Activated CD4-positive, alpha-beta T cell treated with anti-CD3 and anti-CD28 coated beads for 36 hours (primary cell): ENCODE measurements at regions of chr15 and their contacts with region 1.

Region 1: GRCh38 chr15:94582369-94582768 is 351.0 kb downstream of the MCTP2 start:
- DNase-seq: peak; percentile 62
- ATAC-seq: peak; percentile 57
- H3K4me3 Mint-ChIP-seq: no peak overlapping the region
- H3K27ac Mint-ChIP-seq: no peak overlapping the region
- H3K4me1 Mint-ChIP-seq: peaks cover 25% of the 10 kb centered on the region
- H3K27me3 Mint-ChIP-seq: peaks cover 68% of the 10 kb centered on the region

Region 2: GRCh38 chr15:94610069-94610468 is 27.7 kb after region 1 on chr15:
- CTCF ChIA-PET with region 1: interaction called, 8 read pairs
- POLR2A ChIA-PET with region 1: interaction called, 3 read pairs
- intact Hi-C with region 1: loop called in 1 of 2 experiments (anchors 2 kb)
- DNase-seq: no peak
- ATAC-seq: peak; percentile 60
- H3K4me3 Mint-ChIP-seq: no peak overlapping the region
- H3K27ac Mint-ChIP-seq: no peak overlapping the region
- H3K4me1 Mint-ChIP-seq: peaks cover 16% of the 10 kb centered on the region
- H3K27me3 Mint-ChIP-seq: peaks cover 52% of the 10 kb centered on the region

Region 3: GRCh38 chr15:94655249-94655880 is 73.0 kb after region 1 on chr15:
- CTCF ChIA-PET with region 1: no interaction called
- POLR2A ChIA-PET with region 1: no interaction called
- intact Hi-C with region 1: no loop called
- DNase-seq: no peak
- ATAC-seq: no peak
- H3K4me3 Mint-ChIP-seq: no peak overlapping the region
- H3K27ac Mint-ChIP-seq: no peak overlapping the region
- H3K4me1 Mint-ChIP-seq: no peaks in the 10 kb centered on the region
- H3K27me3 Mint-ChIP-seq: peaks cover 14% of the 10 kb centered on the region

Region 4: GRCh38 chr15:95041299-95041698 is 458.9 kb after region 1 on chr15:
- CTCF ChIA-PET with region 1: no interaction called
- POLR2A ChIA-PET with region 1: no interaction called
- intact Hi-C with region 1: no loop called
- DNase-seq: no peak
- ATAC-seq: no peak
- H3K4me3 Mint-ChIP-seq: no peak overlapping the region
- H3K27ac Mint-ChIP-seq: no peak overlapping the region
- H3K4me1 Mint-ChIP-seq: no peaks in the 10 kb centered on the region
- H3K27me3 Mint-ChIP-seq: no peaks in the 10 kb centered on the region

Region 5: DNA sequence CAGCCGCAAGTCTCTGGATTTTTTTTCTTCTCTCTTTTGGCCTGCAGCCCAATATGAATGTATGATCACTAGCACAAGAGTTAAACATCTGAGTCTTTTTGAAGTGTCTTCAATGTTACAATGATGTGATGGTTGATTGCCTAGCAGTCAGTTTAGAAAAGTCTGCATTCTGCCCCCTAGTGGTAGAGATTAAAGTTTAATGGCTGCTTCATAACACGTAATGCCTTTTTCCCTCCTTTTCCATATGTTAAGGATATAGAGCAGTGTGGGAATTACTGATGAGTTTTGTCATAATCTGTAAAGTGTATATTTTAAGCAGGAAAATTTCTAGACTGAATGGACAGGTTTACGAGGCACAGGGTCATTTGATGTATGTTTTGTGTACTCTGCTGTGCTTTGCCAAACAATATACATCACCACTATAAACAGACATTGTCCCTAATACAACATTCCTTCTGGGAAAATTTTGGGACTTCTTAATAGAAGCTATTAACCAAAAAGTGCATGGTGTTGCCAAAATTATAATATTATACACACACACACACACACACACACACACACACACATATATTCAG is 709.6 kb after region 1 on chr15:
- CTCF ChIA-PET with region 1: no interaction called
- POLR2A ChIA-PET with region 1: no interaction called
- intact Hi-C with region 1: loop called (anchors 2 to 10 kb)
- DNase-seq: no peak
- ATAC-seq: no peak
- H3K4me3 Mint-ChIP-seq: no peak overlapping the region
- H3K27ac Mint-ChIP-seq: no peak overlapping the region
- H3K4me1 Mint-ChIP-seq: no peaks in the 10 kb centered on the region
- H3K27me3 Mint-ChIP-seq: peaks cover 29% of the 10 kb centered on the region